Esophagus squamous epithelium (tissue), 5 donors: ENCODE measurements at regions of chr11 and their contacts with region 1.

Region 1: DNA sequence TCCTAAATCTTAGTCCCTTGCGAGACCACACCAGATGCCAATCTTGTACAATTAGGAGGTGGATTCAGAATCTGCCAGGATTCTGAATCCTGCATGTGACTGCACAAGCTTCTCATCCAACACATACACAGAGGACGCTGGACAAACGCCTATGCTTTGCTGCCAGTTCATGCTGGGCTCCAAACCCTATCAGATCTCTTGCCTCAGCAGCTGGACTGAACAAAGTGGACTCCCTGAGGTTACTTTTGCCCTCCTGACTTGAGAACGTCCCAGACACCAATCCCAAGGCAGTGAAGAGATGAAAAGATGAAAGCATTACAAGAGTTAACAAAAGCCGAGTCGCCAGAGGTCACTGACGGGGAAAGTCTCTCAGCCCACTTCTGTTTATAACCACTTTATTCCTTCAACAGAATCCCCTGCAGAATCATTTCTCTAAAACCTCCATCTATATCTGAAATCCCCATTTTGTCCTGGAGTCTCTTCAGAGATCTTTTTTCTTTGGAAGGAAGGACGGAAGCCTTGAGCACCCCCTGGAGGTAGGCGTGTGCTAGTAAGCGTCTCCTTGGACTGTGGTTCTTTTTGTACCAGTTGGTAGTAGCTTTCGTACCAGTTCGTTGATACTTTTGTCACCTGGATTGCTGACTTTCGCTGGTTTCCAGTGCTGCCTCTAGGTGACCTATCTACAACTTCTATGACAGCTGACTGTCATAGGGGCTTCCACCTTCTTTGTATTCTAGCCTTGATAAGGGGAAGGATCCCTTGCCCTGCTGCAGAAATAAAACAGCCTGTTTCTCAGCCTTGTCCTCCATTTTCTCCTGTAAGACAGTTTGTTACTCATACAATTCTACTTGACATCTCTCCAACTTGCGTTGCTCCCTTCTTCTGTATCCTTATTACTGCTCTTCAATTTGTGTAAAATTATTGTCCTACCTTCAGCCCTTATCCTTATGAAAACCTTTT is 26.1 kb upstream of the EED start:
- DNase-seq: no peak
- H3K4me3 ChIP-seq: peak overlapping the region in 2 of 4 donors; percentile 25 to 50
- H3K27ac ChIP-seq: no peak overlapping the region
- H3K4me1 ChIP-seq: peaks cover 0 to 20% (median 5%) of the 10 kb centered on the region in 3 donors
- H3K27me3 ChIP-seq: no peaks in the 10 kb centered on the region
- CTCF ChIP-seq: peak; percentile 80 to 90 (median 83)
- POLR2A ChIP-seq: no peak

Region 2: GRCh38 chr11:85867751-85868150 is 350.7 kb before region 1 on chr11:
- intact Hi-C with region 1: loop called (anchors 10 kb)
- DNase-seq: no peak
- H3K4me3 ChIP-seq: no peak overlapping the region
- H3K27ac ChIP-seq: no peak overlapping the region
- H3K4me1 ChIP-seq: no peaks in the 10 kb centered on the region
- H3K27me3 ChIP-seq: no peaks in the 10 kb centered on the region
- CTCF ChIP-seq: no peak
- POLR2A ChIP-seq: no peak

Region 3: DNA sequence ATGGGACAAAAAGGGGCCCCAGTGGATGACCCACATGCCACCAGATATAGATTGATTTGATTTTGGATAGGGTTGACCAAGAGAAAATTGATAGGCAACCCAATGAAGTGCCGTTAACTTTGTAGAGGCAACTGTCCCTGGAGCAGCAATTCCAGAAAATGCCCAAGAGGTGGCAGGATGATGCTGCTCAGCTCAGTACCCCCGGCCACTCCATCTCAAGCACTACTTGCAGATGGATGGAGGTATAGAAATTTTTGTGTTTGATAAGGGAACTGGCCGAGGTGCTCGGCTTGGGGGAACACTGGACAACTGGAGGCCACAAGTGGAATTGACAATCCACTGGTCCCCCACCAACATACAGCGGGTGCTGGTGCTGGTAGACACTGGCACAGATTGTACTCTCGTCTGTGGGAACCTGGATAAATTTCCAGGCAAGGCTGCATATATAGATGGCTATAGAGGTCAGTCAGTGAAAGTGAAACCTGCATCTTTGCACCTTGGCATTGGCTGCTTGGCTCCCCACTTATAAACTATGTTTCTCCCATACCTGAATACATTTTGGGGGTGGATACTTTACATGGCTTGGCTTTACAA is 276.9 kb before region 1 on chr11:
- intact Hi-C with region 1: loop called (anchors 10 kb)
- DNase-seq: no peak
- H3K4me3 ChIP-seq: no peak overlapping the region
- H3K27ac ChIP-seq: no peak overlapping the region
- H3K4me1 ChIP-seq: peaks cover 0 to 8% (median 0%) of the 10 kb centered on the region in 3 donors
- H3K27me3 ChIP-seq: no peaks in the 10 kb centered on the region
- CTCF ChIP-seq: peak in 5 of 6 experiments; percentile 31 to 65 (median 63)
- POLR2A ChIP-seq: no peak